ENCODE measurements at regions of chr5 and their contacts with region 1.

Region 1: DNA sequence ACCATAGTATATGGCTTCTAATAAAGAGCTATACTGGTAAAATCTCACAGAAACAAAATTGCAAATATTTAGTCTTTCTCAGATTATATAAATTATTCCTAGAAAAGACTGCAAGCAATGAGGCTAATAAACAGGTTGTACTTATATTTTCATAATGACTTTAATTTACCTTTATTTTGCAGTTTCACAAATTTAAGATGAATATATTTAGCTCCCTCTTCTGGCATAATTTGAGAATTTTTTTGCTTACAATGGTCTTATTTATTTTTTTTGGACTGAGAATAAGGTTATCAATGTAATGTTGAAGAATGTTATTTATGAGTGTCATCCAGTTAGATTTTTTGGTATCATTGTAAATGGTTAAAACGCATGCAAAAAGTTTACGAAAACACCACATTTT is 56.7 kb downstream of the PIK3R1 start:
- DNase-seq: peak; percentile 16
- H3K4me3 ChIP-seq: no peak overlapping the region
- H3K27ac ChIP-seq: no peak overlapping the region
- H3K4me1 ChIP-seq: no peaks in the 10 kb centered on the region
- CTCF ChIP-seq: peak; percentile 79

Region 2: GRCh38 chr5:67896311-67896929 is 375.9 kb before region 1 on chr5:
- CTCF ChIA-PET with region 1: no interaction called
- POLR2A ChIA-PET with region 1: no interaction called
- intact Hi-C with region 1: loop called (anchors 10 kb)
- DNase-seq: no peak
- H3K4me3 ChIP-seq: no peak overlapping the region
- H3K27ac ChIP-seq: no peak overlapping the region
- H3K4me1 ChIP-seq: no peaks in the 10 kb centered on the region
- CTCF ChIP-seq: no peak

Region 3: GRCh38 chr5:68319316-68320093 is 47.2 kb after region 1 on chr5:
- CTCF ChIA-PET with region 1: no interaction called
- POLR2A ChIA-PET with region 1: no interaction called
- intact Hi-C with region 1: no loop called
- DNase-seq: no peak
- H3K4me3 ChIP-seq: no peak overlapping the region
- H3K27ac ChIP-seq: no peak overlapping the region
- H3K4me1 ChIP-seq: no peaks in the 10 kb centered on the region
- CTCF ChIP-seq: no peak

Region 4: GRCh38 chr5:68661237-68661636 is 388.9 kb after region 1 on chr5:
- CTCF ChIA-PET with region 1: no interaction called
- POLR2A ChIA-PET with region 1: no interaction called
- intact Hi-C with region 1: no loop called
- DNase-seq: peak; percentile 13
- H3K4me3 ChIP-seq: no peak overlapping the region
- H3K27ac ChIP-seq: no peak overlapping the region
- H3K4me1 ChIP-seq: no peaks in the 10 kb centered on the region
- CTCF ChIP-seq: peak; percentile 69